B cell (primary cell): ENCODE measurements at regions of chr3 and their contacts with region 1.

Region 1: DNA sequence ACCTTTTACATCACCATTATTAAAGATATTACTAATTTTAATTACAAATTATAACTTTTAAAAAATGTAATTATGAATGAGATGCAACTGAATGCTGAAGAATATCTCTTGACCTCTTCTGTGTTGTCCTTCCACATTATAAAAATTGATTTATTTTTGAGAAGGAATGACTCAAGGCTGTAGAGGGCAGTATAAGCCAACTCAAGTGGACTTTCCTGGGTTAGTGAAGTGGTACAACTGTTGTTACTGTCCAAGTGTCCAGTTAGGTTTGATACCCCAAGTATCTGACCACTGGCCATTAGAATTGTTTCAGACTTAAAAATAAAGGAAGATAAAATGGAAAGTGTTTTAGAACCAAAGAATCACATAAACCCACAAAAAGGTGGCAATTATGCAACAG is 51.9 kb downstream of the BBX start:
- DNase-seq: peak; percentile 17
- ATAC-seq: no peak
- H3K4me3 ChIP-seq: no peak overlapping the region
- H3K4me3 Mint-ChIP-seq: no peak overlapping the region
- H3K27ac ChIP-seq: no peak overlapping the region
- H3K27ac Mint-ChIP-seq: no peak overlapping the region
- H3K4me1 ChIP-seq: no peaks in the 10 kb centered on the region
- H3K4me1 Mint-ChIP-seq: peaks cover 24% of the 10 kb centered on the region
- H3K27me3 ChIP-seq: no peaks in the 10 kb centered on the region
- H3K27me3 Mint-ChIP-seq: no peaks in the 10 kb centered on the region
- CTCF ChIP-seq: peak; percentile 63

Region 2: GRCh38 chr3:107404727-107405469 is 169.8 kb before region 1 on chr3:
- CTCF ChIA-PET with region 1: no interaction called
- POLR2A ChIA-PET with region 1: no interaction called
- intact Hi-C with region 1: no loop called
- DNase-seq: no peak
- ATAC-seq: no peak
- H3K4me3 ChIP-seq: no peak overlapping the region
- H3K4me3 Mint-ChIP-seq: no peak overlapping the region
- H3K27ac ChIP-seq: no peak overlapping the region
- H3K27ac Mint-ChIP-seq: no peak overlapping the region
- H3K4me1 ChIP-seq: no peaks in the 10 kb centered on the region
- H3K4me1 Mint-ChIP-seq: no peaks in the 10 kb centered on the region
- H3K27me3 ChIP-seq: no peaks in the 10 kb centered on the region
- H3K27me3 Mint-ChIP-seq: no peaks in the 10 kb centered on the region
- CTCF ChIP-seq: no peak

Region 3: DNA sequence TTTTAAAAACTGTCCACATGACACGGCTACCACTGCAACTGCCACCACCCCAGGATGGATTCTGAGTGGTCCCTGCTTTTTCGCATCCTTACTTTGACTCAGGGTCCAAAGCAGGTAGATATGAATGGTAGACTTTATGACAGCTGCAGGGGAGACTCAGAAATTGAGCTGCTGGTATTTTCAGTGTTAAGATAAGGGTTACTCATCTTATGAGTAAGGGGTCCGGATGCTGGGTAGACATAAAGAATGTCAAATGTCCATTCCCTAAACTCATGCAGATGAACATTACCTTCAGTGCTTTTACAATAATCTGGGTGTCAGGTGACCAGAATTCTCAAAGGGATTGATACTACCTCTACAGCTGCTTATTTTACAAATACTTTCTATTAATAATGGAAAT is 77.8 kb before region 1 on chr3:
- CTCF ChIA-PET with region 1: no interaction called
- POLR2A ChIA-PET with region 1: no interaction called
- intact Hi-C with region 1: no loop called
- DNase-seq: no peak
- ATAC-seq: no peak
- H3K4me3 ChIP-seq: no peak overlapping the region
- H3K4me3 Mint-ChIP-seq: no peak overlapping the region
- H3K27ac ChIP-seq: no peak overlapping the region
- H3K27ac Mint-ChIP-seq: no peak overlapping the region
- H3K4me1 ChIP-seq: no peaks in the 10 kb centered on the region
- H3K4me1 Mint-ChIP-seq: peaks cover 2% of the 10 kb centered on the region
- H3K27me3 ChIP-seq: peaks cover 0 to 3% (median 3%) of the 10 kb centered on the region in 4 experiments
- H3K27me3 Mint-ChIP-seq: peaks cover 8% of the 10 kb centered on the region
- CTCF ChIP-seq: no peak

Region 4: DNA sequence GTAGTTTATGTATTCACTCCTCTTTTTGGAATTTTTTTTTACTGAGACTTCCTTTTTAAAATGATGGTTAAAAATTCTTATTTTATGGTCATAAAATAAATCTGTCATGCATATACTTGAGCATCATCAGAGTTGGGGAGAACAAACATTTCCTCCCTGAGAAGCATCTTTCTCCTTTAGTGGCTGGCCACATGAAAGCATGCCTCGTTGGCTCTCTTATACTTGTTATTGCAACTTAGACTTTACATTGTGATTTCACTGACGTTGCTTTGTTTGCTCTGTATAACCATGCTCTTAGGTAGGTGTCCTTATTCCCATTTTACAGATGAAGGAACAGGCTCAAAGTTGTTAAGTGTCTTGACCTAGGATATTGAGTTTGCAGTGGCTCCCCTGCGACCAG is 33.8 kb before region 1 on chr3:
- CTCF ChIA-PET with region 1: no interaction called
- POLR2A ChIA-PET with region 1: no interaction called
- intact Hi-C with region 1: no loop called
- DNase-seq: no peak
- ATAC-seq: no peak
- H3K4me3 ChIP-seq: no peak overlapping the region
- H3K4me3 Mint-ChIP-seq: no peak overlapping the region
- H3K27ac ChIP-seq: no peak overlapping the region
- H3K27ac Mint-ChIP-seq: no peak overlapping the region
- H3K4me1 ChIP-seq: no peaks in the 10 kb centered on the region
- H3K4me1 Mint-ChIP-seq: peaks cover 15% of the 10 kb centered on the region
- H3K27me3 ChIP-seq: no peaks in the 10 kb centered on the region
- H3K27me3 Mint-ChIP-seq: no peaks in the 10 kb centered on the region
- CTCF ChIP-seq: no peak

Region 5: GRCh38 chr3:107598926-107599771 is 24.5 kb after region 1 on chr3:
- CTCF ChIA-PET with region 1: interaction called, 12 read pairs
- POLR2A ChIA-PET with region 1: no interaction called
- intact Hi-C with region 1: no loop called
- DNase-seq: peak; percentile 59
- ATAC-seq: peak; percentile 84
- H3K4me3 ChIP-seq: peak overlapping the region; percentile 4 to 62 (median 33)
- H3K4me3 Mint-ChIP-seq: peak overlapping the region; percentile 74
- H3K27ac ChIP-seq: peak overlapping the region; percentile 21 to 67
- H3K27ac Mint-ChIP-seq: peak overlapping the region; percentile 32
- H3K4me1 ChIP-seq: peaks cover 23 to 35% of the 10 kb centered on the region in 2 donors
- H3K4me1 Mint-ChIP-seq: peaks cover 54% of the 10 kb centered on the region
- H3K27me3 ChIP-seq: no peaks in the 10 kb centered on the region
- H3K27me3 Mint-ChIP-seq: no peaks in the 10 kb centered on the region
- CTCF ChIP-seq: no peak

Region 6: DNA sequence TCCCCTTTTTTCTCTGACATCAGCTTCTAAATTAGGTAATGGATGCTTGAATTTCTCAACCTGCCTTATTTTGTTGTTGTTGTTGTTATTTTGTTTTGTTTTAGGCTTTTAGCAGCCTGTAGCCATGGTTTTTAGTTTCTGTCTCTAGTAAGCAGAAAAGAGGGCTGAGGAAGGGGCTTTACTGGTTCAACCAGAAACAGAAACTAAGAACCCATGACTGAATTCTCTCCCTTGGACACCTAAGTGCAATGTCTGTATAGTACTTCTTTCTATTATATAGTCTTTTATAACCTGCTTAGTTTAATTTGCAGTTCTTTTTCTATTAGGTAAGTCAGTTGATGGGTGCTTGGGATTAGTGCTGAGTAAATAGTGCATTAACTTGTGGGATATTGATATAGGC is 77.1 kb after region 1 on chr3:
- CTCF ChIA-PET with region 1: no interaction called
- POLR2A ChIA-PET with region 1: no interaction called
- intact Hi-C with region 1: no loop called
- DNase-seq: no peak
- ATAC-seq: no peak
- H3K4me3 ChIP-seq: no peak overlapping the region
- H3K4me3 Mint-ChIP-seq: peak overlapping the region; percentile 18
- H3K27ac ChIP-seq: peak overlapping the region in 1 of 2 donors; percentile 38
- H3K27ac Mint-ChIP-seq: peak overlapping the region; percentile 81
- H3K4me1 ChIP-seq: peaks cover 0 to 5% of the 10 kb centered on the region in 2 donors
- H3K4me1 Mint-ChIP-seq: peaks cover 30% of the 10 kb centered on the region
- H3K27me3 ChIP-seq: no peaks in the 10 kb centered on the region
- H3K27me3 Mint-ChIP-seq: no peaks in the 10 kb centered on the region
- CTCF ChIP-seq: no peak